Endothelial cell of umbilical vein (primary cell): ENCODE measurements at regions of chr3 and their contacts with region 1.

Region 1: GRCh38 chr3:17518189-17519059 is 224.0 kb downstream of the TBC1D5 start:
- DNase-seq: no peak
- H3K4me3 ChIP-seq: no peak overlapping the region
- H3K27ac ChIP-seq: no peak overlapping the region
- H3K4me1 ChIP-seq: no peaks in the 10 kb centered on the region
- H3K27me3 ChIP-seq: no peaks in the 10 kb centered on the region
- CTCF ChIP-seq: no peak
- POLR2A ChIP-seq: no peak

Region 2: GRCh38 chr3:17243621-17244020 is 274.8 kb before region 1 on chr3:
- CTCF ChIA-PET with region 1: no interaction called
- POLR2A ChIA-PET with region 1: interaction called, 14 read pairs
- dilution Hi-C with region 1: no loop called
- intact Hi-C with region 1: no loop called
- DNase-seq: no peak
- H3K4me3 ChIP-seq: no peak overlapping the region
- H3K27ac ChIP-seq: no peak overlapping the region
- H3K4me1 ChIP-seq: no peaks in the 10 kb centered on the region
- H3K27me3 ChIP-seq: no peaks in the 10 kb centered on the region
- CTCF ChIP-seq: no peak
- POLR2A ChIP-seq: no peak

Region 3: GRCh38 chr3:18643281-18643680 is 1124.9 kb after region 1 on chr3:
- CTCF ChIA-PET with region 1: no interaction called
- POLR2A ChIA-PET with region 1: no interaction called
- dilution Hi-C with region 1: no loop called
- intact Hi-C with region 1: no loop called
- DNase-seq: no peak
- H3K4me3 ChIP-seq: no peak overlapping the region
- H3K27ac ChIP-seq: no peak overlapping the region
- H3K4me1 ChIP-seq: no peaks in the 10 kb centered on the region
- H3K27me3 ChIP-seq: no peaks in the 10 kb centered on the region
- CTCF ChIP-seq: no peak
- POLR2A ChIP-seq: no peak